ENCODE measurements at regions of chr2 and their contacts with region 1.

Region 1: DNA sequence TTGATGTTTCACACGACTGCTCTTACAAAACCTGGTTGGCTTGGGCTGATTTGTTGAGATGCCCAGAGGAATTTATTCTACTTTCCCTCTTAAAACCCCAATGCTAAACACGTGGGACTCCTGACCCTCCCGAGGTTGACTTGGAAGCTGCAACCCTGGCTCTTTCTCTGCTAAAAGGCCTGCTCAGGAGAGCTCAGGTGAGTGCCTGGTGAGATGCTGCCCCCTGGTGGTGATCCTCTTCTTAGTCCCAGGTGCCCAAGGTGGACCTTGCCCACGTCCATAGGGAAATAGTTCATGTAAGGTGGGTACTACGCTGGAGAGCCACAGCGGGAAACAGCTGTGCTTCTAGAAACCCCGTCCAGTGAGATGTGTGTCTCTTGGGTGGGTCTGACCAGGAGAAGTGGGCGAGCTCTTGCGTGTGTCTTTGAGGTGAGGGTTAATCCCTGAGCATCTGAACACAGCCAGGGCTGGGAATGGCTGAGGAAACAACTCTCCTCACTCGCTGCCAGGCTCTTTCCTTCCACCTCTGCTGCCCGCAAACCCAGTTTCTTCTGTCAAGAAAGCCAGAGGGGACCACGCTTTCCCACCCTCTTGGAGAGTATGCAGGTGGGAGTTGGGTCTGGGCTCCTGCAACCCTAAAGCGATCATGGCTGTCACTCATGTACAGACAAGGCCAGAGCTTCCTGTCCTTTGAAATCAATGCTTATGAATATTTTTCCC is 25.5 kb upstream of the PXDN start:
- DNase-seq: peak; percentile 95
- ATAC-seq: peak; percentile 79
- H3K4me3 Mint-ChIP-seq: no peak overlapping the region
- H3K27ac Mint-ChIP-seq: peak overlapping the region; percentile 78; the same call in 1 of the 2 replicates
- H3K4me1 Mint-ChIP-seq: peaks cover 42% of the 10 kb centered on the region
- H3K27me3 Mint-ChIP-seq: peaks cover 15% of the 10 kb centered on the region
- CTCF ChIP-seq: peak; percentile 93

Region 2: DNA sequence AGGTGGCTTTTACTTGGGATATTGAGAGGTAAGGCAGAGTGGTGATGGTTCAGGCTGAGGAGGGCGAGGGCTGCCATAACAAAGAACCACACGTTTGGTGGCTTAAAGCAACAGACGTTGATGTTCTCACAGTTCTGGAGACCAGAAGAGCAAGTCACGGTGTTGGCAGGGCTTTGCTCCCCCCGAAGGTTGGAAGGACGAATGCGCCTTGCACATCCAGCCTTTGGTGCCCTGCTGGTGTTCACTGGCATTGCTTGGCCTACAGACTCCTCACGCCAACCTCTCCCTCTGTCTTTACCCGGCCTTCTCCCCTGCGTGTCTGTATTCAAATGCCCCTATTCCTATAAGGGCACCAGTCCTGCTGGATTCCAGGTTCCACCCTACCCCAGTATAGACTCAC is 231.2 kb before region 1 on chr2:
- CTCF ChIA-PET with region 1: no interaction called
- POLR2A ChIA-PET with region 1: no interaction called
- DNase-seq: peak; percentile 58
- ATAC-seq: peak; percentile 96
- H3K4me3 Mint-ChIP-seq: no peak overlapping the region
- H3K27ac Mint-ChIP-seq: no peak overlapping the region
- H3K4me1 Mint-ChIP-seq: no peaks in the 10 kb centered on the region
- H3K27me3 Mint-ChIP-seq: no peaks in the 10 kb centered on the region
- CTCF ChIP-seq: no peak; the same call in 1 of the 2 replicates

Region 3: GRCh38 chr2:1591978-1592907 is 177.6 kb before region 1 on chr2:
- CTCF ChIA-PET with region 1: interaction called, 10 read pairs
- POLR2A ChIA-PET with region 1: no interaction called
- DNase-seq: peak; percentile 80
- ATAC-seq: peak; percentile 81
- H3K4me3 Mint-ChIP-seq: no peak overlapping the region
- H3K27ac Mint-ChIP-seq: no peak overlapping the region; the same call in 1 of the 2 replicates
- H3K4me1 Mint-ChIP-seq: peaks cover 30% of the 10 kb centered on the region
- H3K27me3 Mint-ChIP-seq: no peaks in the 10 kb centered on the region
- CTCF ChIP-seq: peak; percentile 32; the same call in 1 of the 2 replicates

Region 4: DNA sequence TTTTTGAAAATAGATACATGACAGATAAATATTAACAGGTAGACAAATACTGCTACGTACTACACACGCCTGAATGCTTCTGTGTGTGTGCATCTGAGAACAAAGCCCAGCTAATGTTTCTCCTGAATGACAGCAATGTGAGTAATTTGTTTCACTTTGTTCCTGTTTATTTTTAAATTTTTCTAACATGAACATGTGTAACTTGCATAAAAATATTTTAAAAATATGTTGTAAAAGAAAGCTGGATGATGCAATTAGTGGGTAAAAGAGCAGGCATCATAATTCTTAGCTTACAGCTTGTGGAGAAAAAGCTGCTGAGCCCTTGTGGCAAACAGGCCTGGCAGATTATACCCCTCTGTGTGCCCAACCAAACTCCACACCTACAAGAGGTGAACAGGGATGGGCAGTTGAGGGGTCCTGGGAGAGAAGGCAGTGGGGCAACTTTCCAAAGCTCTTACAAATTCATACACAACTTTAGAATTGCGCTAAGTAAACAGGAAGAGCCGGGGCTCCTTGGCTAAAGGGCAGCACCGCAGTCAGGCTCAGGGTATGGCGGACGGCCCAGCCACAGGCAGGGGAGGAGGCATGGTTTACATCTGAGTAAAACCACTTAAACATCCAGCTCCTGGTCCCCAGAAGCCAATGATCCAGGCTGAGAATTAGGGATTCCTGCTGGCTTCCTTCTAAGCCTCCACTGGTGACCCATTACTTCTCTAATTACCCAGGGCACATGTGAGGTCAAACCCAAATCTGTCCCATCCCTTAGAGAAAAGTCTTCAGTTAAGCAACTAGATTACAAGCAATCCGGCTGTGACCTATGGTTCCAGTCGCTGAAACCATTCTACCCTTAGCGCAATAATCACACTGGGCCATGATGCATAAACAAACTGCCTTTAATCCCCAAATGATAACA is 39.6 kb before region 1 on chr2:
- CTCF ChIA-PET with region 1: interaction called, 12 read pairs
- POLR2A ChIA-PET with region 1: no interaction called
- DNase-seq: peak; percentile 38
- ATAC-seq: peak; percentile 86
- H3K4me3 Mint-ChIP-seq: peak overlapping the region; percentile 18; the same call in 1 of the 2 replicates
- H3K27ac Mint-ChIP-seq: peak overlapping the region; percentile 88
- H3K4me1 Mint-ChIP-seq: peaks cover 60% of the 10 kb centered on the region
- H3K27me3 Mint-ChIP-seq: no peaks in the 10 kb centered on the region; the same call in 1 of the 2 replicates
- CTCF ChIP-seq: no peak

Region 5: GRCh38 chr2:1781271-1782080 is 11.6 kb after region 1 on chr2:
- CTCF ChIA-PET with region 1: interaction called, 10 read pairs
- POLR2A ChIA-PET with region 1: no interaction called
- DNase-seq: no peak
- ATAC-seq: peak; percentile 62
- H3K4me3 Mint-ChIP-seq: no peak overlapping the region
- H3K27ac Mint-ChIP-seq: no peak overlapping the region
- H3K4me1 Mint-ChIP-seq: peaks cover 13% of the 10 kb centered on the region
- H3K27me3 Mint-ChIP-seq: no peaks in the 10 kb centered on the region
- CTCF ChIP-seq: no peak

Measured in WTC11 (cell line).